ENCODE measurements at regions of chr3 and their contacts with region 1.

Region 1: DNA sequence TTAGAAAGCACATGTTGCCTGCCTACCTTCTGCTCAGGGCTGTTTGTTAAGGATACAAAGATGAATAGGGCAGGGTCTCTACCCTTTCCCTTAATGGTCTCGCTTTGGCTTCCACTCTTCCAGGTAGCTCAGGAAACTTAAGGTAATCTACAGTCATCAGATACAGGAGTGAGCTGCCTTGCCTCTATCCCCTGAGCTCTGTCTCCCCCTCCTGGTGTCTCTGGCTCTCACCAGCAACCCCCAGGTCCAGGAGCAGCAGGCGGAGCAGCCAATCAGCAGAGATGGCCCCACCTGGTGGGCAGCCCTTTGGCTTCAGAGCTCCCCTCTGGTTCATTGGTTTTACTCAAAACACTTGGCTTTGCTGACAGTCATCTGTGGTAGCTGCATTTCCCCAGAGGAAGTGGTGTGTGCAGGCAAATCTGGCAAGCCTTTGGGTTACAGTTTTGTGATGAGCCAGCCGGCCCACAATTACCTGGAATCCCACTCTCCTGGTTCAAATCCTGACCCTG is 8.5 kb upstream of the CX3CR1 start:
- DNase-seq: peak; percentile 80
- H3K4me3 Mint-ChIP-seq: no peak overlapping the region
- H3K27ac Mint-ChIP-seq: no peak overlapping the region
- H3K4me1 Mint-ChIP-seq: peaks cover 7% of the 10 kb centered on the region
- H3K27me3 Mint-ChIP-seq: no peaks in the 10 kb centered on the region
- CTCF ChIP-seq: peak; percentile 94

Region 2: GRCh38 chr3:39101022-39101689 is 187.2 kb before region 1 on chr3:
- CTCF ChIA-PET with region 1: interaction called, 39 read pairs
- POLR2A ChIA-PET with region 1: interaction called, 7 read pairs
- intact Hi-C with region 1: loop called (anchors 1 kb)
- DNase-seq: peak; percentile 51
- H3K4me3 Mint-ChIP-seq: no peak overlapping the region
- H3K27ac Mint-ChIP-seq: no peak overlapping the region
- H3K4me1 Mint-ChIP-seq: peaks cover 22% of the 10 kb centered on the region
- H3K27me3 Mint-ChIP-seq: no peaks in the 10 kb centered on the region
- CTCF ChIP-seq: peak; percentile 63

Region 3: DNA sequence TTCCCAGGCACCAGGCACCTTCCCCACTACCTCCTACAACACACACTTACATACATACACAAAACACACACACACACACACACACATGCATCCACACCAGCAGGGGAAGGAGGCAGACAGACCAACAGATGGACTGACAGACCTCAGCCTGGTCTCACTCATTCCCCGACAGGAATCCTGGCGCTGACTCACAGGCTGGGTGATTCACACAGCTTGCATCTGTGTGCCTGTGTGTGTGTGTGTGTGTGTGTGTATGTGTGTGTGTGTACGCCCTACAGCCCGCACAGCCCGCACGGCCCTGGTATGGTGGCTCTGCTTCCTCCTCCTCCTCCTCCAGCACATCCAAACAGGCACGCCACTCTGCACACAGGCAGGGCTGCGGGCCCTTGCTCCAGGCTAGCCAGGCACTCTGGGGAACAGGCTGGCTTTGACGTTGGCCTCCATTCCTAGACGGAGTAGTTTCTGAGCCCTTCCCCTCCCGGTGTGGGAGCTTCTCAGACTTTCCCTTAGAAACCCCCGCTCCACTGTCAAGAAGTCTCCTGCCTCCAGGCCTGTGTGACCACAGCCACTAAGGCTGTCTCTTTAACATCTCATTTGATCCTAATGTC is 141.3 kb before region 1 on chr3:
- CTCF ChIA-PET with region 1: interaction called, 10 read pairs
- POLR2A ChIA-PET with region 1: interaction called, 5 read pairs
- intact Hi-C with region 1: no loop called
- DNase-seq: peak; percentile 97
- H3K4me3 Mint-ChIP-seq: peak overlapping the region; percentile 37
- H3K27ac Mint-ChIP-seq: peak overlapping the region; percentile 66
- H3K4me1 Mint-ChIP-seq: peaks cover 62% of the 10 kb centered on the region
- H3K27me3 Mint-ChIP-seq: no peaks in the 10 kb centered on the region
- CTCF ChIP-seq: no peak

Region 4: DNA sequence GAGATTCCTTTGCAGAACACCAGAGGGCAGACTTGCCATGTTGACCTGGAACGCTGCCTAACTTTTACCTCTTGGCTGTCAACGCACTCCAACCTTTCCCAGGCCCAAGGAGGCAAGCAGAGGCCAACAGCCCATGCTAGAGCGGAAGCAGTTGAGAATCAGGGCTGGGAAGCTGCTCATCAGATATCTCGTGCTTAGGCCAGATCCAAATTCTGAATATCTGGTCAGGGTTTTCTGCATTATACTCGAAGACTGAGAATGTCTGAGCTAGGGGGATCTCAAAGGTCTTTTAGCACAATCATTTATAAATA is 98.4 kb before region 1 on chr3:
- CTCF ChIA-PET with region 1: interaction called, 477 read pairs
- POLR2A ChIA-PET with region 1: interaction called, 4 read pairs
- intact Hi-C with region 1: loop called (anchors 1 kb)
- DNase-seq: peak; percentile 80
- H3K4me3 Mint-ChIP-seq: no peak overlapping the region
- H3K27ac Mint-ChIP-seq: no peak overlapping the region
- H3K4me1 Mint-ChIP-seq: peaks cover 7% of the 10 kb centered on the region
- H3K27me3 Mint-ChIP-seq: no peaks in the 10 kb centered on the region
- CTCF ChIP-seq: peak; percentile 69

Region 5: GRCh38 chr3:39249453-39250115 is 38.8 kb before region 1 on chr3:
- CTCF ChIA-PET with region 1: interaction called, 14 read pairs
- POLR2A ChIA-PET with region 1: no interaction called
- intact Hi-C with region 1: no loop called
- DNase-seq: peak; percentile 21
- H3K4me3 Mint-ChIP-seq: no peak overlapping the region
- H3K27ac Mint-ChIP-seq: no peak overlapping the region
- H3K4me1 Mint-ChIP-seq: no peaks in the 10 kb centered on the region
- H3K27me3 Mint-ChIP-seq: peaks cover 45% of the 10 kb centered on the region
- CTCF ChIP-seq: no peak

Region 6: DNA sequence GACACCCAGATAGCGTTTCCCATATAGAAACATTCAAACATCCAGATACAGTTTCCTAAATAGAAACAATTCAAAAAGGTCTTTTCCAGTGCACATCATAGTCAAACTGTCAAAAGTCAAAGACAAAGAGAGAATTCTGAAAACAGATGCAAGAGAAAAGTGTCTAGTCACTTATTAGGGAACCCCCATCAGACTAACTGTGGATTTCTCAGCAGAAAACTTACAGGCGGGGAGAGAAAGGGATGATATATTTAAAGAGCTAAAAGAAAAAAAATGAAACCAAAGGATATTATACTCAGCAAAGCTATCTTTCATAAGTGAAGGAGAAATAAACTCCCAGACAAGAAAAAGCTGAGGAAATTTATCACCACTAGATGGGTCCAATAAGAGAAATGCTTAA is 13.8 kb after region 1 on chr3:
- CTCF ChIA-PET with region 1: interaction called, 23 read pairs
- POLR2A ChIA-PET with region 1: no interaction called
- intact Hi-C with region 1: no loop called
- DNase-seq: no peak
- H3K4me3 Mint-ChIP-seq: no peak overlapping the region
- H3K27ac Mint-ChIP-seq: no peak overlapping the region
- H3K4me1 Mint-ChIP-seq: no peaks in the 10 kb centered on the region
- H3K27me3 Mint-ChIP-seq: peaks cover 77% of the 10 kb centered on the region
- CTCF ChIP-seq: no peak

Region 7: GRCh38 chr3:39378088-39378487 is 89.7 kb after region 1 on chr3:
- CTCF ChIA-PET with region 1: interaction called, 83 read pairs
- POLR2A ChIA-PET with region 1: no interaction called
- intact Hi-C with region 1: loop called (anchors 5 kb)
- DNase-seq: peak; percentile 67
- H3K4me3 Mint-ChIP-seq: no peak overlapping the region
- H3K27ac Mint-ChIP-seq: no peak overlapping the region
- H3K4me1 Mint-ChIP-seq: peaks cover 2% of the 10 kb centered on the region
- H3K27me3 Mint-ChIP-seq: no peaks in the 10 kb centered on the region
- CTCF ChIP-seq: peak; percentile 77

Measured in MCF 10A (cell line).